ENCODE measurements at regions of chr3 and their contacts with region 1.

Region 1: GRCh38 chr3:12632523-12632922 is 31.4 kb downstream of the RAF1 start:
- DNase-seq: no peak
- H3K4me3 Mint-ChIP-seq: no peak overlapping the region
- H3K27ac Mint-ChIP-seq: no peak overlapping the region
- H3K4me1 Mint-ChIP-seq: peaks cover 4% of the 10 kb centered on the region
- H3K27me3 Mint-ChIP-seq: no peaks in the 10 kb centered on the region
- CTCF ChIP-seq: no peak

Region 2: GRCh38 chr3:12532182-12532581 is 100.3 kb before region 1 on chr3:
- CTCF ChIA-PET with region 1: no interaction called
- POLR2A ChIA-PET with region 1: no interaction called
- intact Hi-C with region 1: no loop called
- DNase-seq: no peak
- H3K4me3 Mint-ChIP-seq: no peak overlapping the region
- H3K27ac Mint-ChIP-seq: no peak overlapping the region
- H3K4me1 Mint-ChIP-seq: no peaks in the 10 kb centered on the region
- H3K27me3 Mint-ChIP-seq: no peaks in the 10 kb centered on the region
- CTCF ChIP-seq: no peak

Region 3: GRCh38 chr3:12615266-12615665 is 17.3 kb before region 1 on chr3:
- CTCF ChIA-PET with region 1: interaction called, 10 read pairs
- POLR2A ChIA-PET with region 1: no interaction called
- intact Hi-C with region 1: no loop called
- DNase-seq: no peak
- H3K4me3 Mint-ChIP-seq: no peak overlapping the region
- H3K27ac Mint-ChIP-seq: no peak overlapping the region
- H3K4me1 Mint-ChIP-seq: peaks cover 5% of the 10 kb centered on the region
- H3K27me3 Mint-ChIP-seq: no peaks in the 10 kb centered on the region
- CTCF ChIP-seq: no peak